Activated T-helper 2 cell treated with anti-CD3 and anti-CD28 coated beads, Interferon-gamma antibody, Interleukin-2, Interleukin-4, amounts not matched to agents 10 μg/mL and 5 μg/mL and 100 μg/mL, durations not matched to agents 14 hours and 24 hours and 36 hours (primary cell): ENCODE measurements at regions of chr3 and their contacts with region 1.

Region 1: GRCh38 chr3:48556793-48557626 is at the start of gene PFKFB4:
- DNase-seq: peak; percentile 99
- H3K4me3 Mint-ChIP-seq: peak within 1 kb of the TSS; percentile 86
- H3K27ac Mint-ChIP-seq: peak within 1 kb of the TSS; percentile 93
- H3K4me1 Mint-ChIP-seq: peaks cover 51% of the 10 kb centered on the region
- H3K27me3 Mint-ChIP-seq: no peaks in the 10 kb centered on the region
- total RNA-seq, gene PFKFB4: 53.0 and 57.0 TPM in 2 replicates

Region 2: GRCh38 chr3:48240711-48241491 is 316.1 kb before region 1 on chr3 and contains the start of gene ZNF589:
- intact Hi-C with region 1: loop called (anchors 10 kb)
- DNase-seq: peak; percentile 94
- H3K4me3 Mint-ChIP-seq: peak within 1 kb of the TSS; percentile 91
- H3K27ac Mint-ChIP-seq: peak within 1 kb of the TSS; percentile 96
- H3K4me1 Mint-ChIP-seq: peaks cover 20% of the 10 kb centered on the region
- H3K27me3 Mint-ChIP-seq: no peaks in the 10 kb centered on the region
- total RNA-seq, gene ZNF589: 40.2 and 42.8 TPM in 2 replicates

Region 3: GRCh38 chr3:48472915-48473616 is 83.9 kb before region 1 on chr3:
- intact Hi-C with region 1: loop called (anchors 2 kb)
- DNase-seq: peak; percentile 95
- H3K4me3 Mint-ChIP-seq: peak overlapping the region; percentile 76
- H3K27ac Mint-ChIP-seq: peak overlapping the region; percentile 93
- H3K4me1 Mint-ChIP-seq: peaks cover 47% of the 10 kb centered on the region
- H3K27me3 Mint-ChIP-seq: no peaks in the 10 kb centered on the region

Region 4: DNA sequence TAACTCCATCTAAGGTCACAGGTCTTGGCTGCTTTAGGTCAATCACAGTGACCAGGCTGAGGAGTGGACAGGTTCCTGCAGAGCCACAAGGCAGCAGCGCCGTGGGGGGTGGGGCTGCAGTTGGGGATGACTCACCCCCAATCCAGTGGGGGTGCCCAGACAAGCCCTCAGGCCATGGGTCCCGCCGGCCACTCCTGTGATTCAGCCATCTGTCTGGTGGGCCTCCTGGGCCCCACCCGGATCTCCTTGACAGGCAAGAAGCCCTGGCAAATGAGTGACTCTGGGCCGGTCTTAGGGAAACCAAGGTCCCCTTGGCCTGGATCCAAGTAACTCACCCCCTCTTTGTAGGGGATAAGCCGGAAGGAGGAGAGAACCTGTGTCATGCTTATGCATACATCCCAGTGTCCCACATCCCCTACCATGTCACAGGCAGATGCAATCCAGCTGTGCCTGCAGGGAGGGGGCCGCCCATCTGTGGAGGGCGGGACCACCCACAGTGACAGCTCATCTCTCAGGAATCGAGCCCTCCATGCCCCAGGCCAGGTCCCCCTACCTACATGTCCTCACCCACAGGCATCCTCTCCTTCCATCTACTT is 38.6 kb after region 1 on chr3:
- intact Hi-C with region 1: no loop called
- DNase-seq: no peak
- H3K4me3 Mint-ChIP-seq: no peak overlapping the region
- H3K27ac Mint-ChIP-seq: no peak overlapping the region
- H3K4me1 Mint-ChIP-seq: no peaks in the 10 kb centered on the region
- H3K27me3 Mint-ChIP-seq: peaks cover 12% of the 10 kb centered on the region

Region 5: GRCh38 chr3:48609088-48610005 is 52.3 kb after region 1 on chr3 and contains the start of gene UQCRC1:
- intact Hi-C with region 1: loop called (anchors 2 kb)
- DNase-seq: peak; percentile 93
- H3K4me3 Mint-ChIP-seq: peak within 1 kb of the TSS; percentile 99
- H3K27ac Mint-ChIP-seq: peak within 1 kb of the TSS; percentile 98
- H3K4me1 Mint-ChIP-seq: peaks cover 21% of the 10 kb centered on the region
- H3K27me3 Mint-ChIP-seq: no peaks in the 10 kb centered on the region
- total RNA-seq, gene UQCRC1: 248 and 273 TPM in 2 replicates

Region 6: GRCh38 chr3:48663415-48664312 is 106.7 kb after region 1 on chr3:
- intact Hi-C with region 1: loop called (anchors 1 kb)
- DNase-seq: peak; percentile 94
- H3K4me3 Mint-ChIP-seq: peak overlapping the region; percentile 90
- H3K27ac Mint-ChIP-seq: peak overlapping the region; percentile 99
- H3K4me1 Mint-ChIP-seq: peaks cover 10% of the 10 kb centered on the region
- H3K27me3 Mint-ChIP-seq: peaks cover 8% of the 10 kb centered on the region

Region 7: DNA sequence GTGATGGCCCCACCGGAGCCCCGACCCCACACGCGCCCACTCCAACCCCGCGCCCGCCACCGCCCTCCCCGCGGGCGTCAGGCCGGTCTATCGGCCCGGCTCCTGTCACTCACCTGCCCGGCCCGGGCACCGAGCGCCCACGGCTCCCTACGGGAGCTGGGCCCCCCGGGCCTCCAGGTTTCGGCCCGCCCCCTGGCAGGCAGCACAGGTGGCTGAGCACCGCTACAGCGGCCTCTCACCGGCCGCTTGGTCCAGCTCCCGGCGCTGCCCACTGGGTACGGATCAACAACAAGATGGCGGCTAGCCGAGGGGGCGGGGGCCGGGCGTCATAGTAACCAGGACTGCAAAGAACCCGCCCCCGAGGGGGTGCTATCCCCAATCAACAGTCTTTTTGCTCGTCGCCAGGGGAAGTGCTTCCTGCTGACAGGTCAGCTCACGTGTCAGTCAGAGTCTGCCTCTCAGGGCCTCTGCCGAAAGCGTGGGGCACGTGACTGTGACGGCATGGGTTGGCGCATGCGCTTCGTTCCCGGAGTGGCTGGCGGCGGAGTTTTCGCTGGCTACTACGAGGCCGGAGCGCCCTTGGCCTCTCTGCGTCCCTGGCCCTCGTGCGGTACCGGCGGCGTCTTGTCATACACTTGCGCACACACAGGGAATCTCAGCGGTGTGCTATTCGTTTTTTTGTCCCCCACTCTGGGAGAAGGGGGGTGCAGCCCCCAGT is 1229.4 kb after region 1 on chr3 and contains the start of gene IP6K1:
- intact Hi-C with region 1: no loop called
- DNase-seq: peak; percentile 100
- H3K4me3 Mint-ChIP-seq: peak within 1 kb of the TSS; percentile 90
- H3K27ac Mint-ChIP-seq: peak within 1 kb of the TSS; percentile 95
- H3K4me1 Mint-ChIP-seq: peaks cover 18% of the 10 kb centered on the region
- H3K27me3 Mint-ChIP-seq: no peaks in the 10 kb centered on the region
- total RNA-seq, gene IP6K1: 36.9 and 40.7 TPM in 2 replicates